Panc1 (cell line): ENCODE measurements at regions of chr1 and their contacts with region 1.

Region 1: DNA sequence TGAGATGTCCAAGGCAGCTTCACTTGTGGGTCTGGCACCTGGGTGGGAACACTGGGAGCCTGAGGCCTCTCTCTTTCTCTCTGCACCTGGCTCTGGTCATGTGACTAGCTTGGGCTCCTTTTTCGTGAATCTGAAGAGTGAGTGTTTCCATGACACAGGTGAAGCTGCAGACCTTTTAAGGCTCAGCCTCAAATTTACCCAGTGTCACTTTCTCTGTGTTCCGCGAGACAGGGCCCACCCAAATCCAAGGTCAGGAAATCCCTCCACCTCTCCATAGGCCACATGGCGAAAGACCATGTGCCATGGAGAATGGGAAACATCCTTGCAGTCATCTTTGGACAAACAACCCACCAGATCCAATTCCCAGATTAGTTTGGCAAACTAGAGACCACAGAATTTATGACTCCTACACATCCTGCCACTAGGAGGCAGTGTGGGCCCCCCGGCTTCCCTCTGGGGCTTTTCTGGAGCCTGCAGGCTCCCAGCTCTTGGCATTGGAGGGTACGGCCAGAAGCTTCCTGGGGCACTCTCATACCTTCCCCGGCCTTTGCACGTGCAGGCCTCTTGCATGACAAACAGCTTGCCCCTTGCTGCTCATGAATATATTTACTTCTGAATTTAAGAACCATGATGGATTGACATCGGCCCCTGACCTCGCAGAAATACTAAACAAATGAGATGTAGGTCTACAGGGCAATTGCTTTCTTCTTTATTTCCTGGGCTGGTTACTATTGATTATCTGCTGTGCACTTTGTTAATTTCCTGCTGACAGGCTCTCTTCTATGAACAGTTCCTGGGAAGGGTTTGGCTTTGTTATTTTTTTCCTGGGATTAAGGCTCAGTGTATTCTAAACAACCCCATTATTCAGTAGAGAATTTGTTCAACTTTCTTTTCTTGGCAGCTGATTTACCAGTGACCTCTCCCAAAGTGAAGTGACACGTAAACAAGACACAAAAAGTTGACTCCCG is 180.7 kb downstream of the KAZN start:
- DNase-seq: no peak
- ATAC-seq: peak; percentile 66; the same call in 1 of the 2 replicates
- H3K4me3 ChIP-seq: no peak overlapping the region
- H3K27ac ChIP-seq: no peak overlapping the region
- H3K4me1 ChIP-seq: no peaks in the 10 kb centered on the region
- H3K27me3 ChIP-seq: no peaks in the 10 kb centered on the region
- CTCF ChIP-seq: peak; percentile 88

Region 2: DNA sequence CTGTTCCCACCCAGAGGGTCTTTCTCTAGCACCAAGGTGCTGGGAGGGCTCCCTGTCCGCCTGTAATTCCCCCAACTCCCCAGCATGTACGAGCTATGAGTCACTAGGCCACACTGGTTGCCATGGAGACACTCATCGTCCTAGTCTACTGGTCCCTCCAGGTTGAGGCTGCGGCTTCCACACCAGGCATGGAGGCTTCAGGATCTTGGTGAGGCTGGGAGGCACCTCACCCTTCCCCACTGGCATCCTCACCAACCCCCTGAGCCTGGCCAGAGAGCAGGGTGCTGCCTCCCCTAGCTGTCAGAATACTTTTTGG is 256.3 kb before region 1 on chr1:
- CTCF ChIA-PET with region 1: no interaction called
- POLR2A ChIA-PET with region 1: no interaction called
- in situ Hi-C with region 1: no loop called
- intact Hi-C with region 1: no loop called
- DNase-seq: no peak
- ATAC-seq: peak; percentile 80
- H3K4me3 ChIP-seq: no peak overlapping the region
- H3K27ac ChIP-seq: no peak overlapping the region
- H3K4me1 ChIP-seq: no peaks in the 10 kb centered on the region
- H3K27me3 ChIP-seq: no peaks in the 10 kb centered on the region
- CTCF ChIP-seq: no peak

Region 3: DNA sequence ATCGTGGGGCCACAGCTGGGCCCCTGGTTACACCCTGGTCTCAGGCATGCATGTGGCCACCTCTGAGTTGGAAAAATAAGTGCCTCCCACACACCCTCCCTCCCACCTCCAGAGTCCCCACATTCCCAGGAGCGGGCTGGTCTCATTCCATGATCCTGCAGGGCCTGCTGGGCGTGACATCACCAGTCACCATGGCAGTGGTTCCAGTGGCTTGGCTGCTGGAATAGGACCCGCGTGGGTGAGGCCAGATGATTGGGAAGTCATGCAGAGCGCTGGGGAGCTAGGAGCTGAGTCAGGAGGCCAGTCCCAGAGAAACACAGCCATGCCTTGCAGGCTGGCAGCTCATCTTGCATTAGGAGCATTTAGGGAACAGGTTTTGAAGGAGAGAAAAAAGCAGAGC is 248.9 kb after region 1 on chr1:
- CTCF ChIA-PET with region 1: interaction called, 10 read pairs
- POLR2A ChIA-PET with region 1: no interaction called
- in situ Hi-C with region 1: no loop called
- intact Hi-C with region 1: no loop called
- DNase-seq: no peak
- ATAC-seq: peak; percentile 27
- H3K4me3 ChIP-seq: no peak overlapping the region
- H3K27ac ChIP-seq: no peak overlapping the region
- H3K4me1 ChIP-seq: no peaks in the 10 kb centered on the region
- H3K27me3 ChIP-seq: no peaks in the 10 kb centered on the region
- CTCF ChIP-seq: no peak